RWPE1 (cell line): ENCODE measurements at regions of chr17 and their contacts with region 1.

Region 1: GRCh38 chr17:36705874-36706731 is 104.7 kb downstream of the MRM1 start:
- DNase-seq: peak; percentile 72
- H3K27ac ChIP-seq: no peak overlapping the region
- CTCF ChIP-seq: peak; percentile 74

Region 2: GRCh38 chr17:36674278-36674650 is 31.8 kb before region 1 on chr17:
- CTCF ChIA-PET with region 1: no interaction called
- POLR2A ChIA-PET with region 1: no interaction called
- DNase-seq: no peak
- H3K27ac ChIP-seq: no peak overlapping the region
- CTCF ChIP-seq: no peak

Region 3: DNA sequence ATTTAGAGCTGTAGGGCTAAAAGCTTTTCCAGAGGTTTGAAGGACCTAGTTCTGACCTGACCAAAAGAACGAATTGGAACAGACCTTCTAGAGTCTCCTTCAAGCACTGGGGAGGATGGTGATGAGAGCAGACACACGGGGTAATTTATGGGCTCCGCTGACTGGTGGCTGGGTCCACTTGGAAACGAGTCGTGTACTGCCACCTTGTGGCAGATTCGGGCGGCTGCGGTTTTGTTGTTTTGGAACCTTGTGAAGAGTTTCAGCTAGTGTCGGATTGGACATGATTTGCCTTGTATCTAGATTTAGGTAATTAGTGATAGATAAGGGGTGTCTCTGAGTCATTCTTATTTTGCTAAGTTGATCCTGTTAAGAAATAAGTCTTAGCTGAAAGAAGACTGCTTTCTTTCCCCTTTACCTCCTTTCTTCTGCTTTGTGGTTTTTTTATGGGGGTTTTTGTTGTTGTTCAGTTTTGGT is 341.6 kb after region 1 on chr17:
- CTCF ChIA-PET with region 1: interaction called, 11 read pairs
- POLR2A ChIA-PET with region 1: no interaction called
- DNase-seq: peak; percentile 69
- H3K27ac ChIP-seq: no peak overlapping the region
- CTCF ChIP-seq: peak; percentile 88